HEK293 (cell line): ENCODE measurements at regions of chr20 and their contacts with region 1.

Region 1: DNA sequence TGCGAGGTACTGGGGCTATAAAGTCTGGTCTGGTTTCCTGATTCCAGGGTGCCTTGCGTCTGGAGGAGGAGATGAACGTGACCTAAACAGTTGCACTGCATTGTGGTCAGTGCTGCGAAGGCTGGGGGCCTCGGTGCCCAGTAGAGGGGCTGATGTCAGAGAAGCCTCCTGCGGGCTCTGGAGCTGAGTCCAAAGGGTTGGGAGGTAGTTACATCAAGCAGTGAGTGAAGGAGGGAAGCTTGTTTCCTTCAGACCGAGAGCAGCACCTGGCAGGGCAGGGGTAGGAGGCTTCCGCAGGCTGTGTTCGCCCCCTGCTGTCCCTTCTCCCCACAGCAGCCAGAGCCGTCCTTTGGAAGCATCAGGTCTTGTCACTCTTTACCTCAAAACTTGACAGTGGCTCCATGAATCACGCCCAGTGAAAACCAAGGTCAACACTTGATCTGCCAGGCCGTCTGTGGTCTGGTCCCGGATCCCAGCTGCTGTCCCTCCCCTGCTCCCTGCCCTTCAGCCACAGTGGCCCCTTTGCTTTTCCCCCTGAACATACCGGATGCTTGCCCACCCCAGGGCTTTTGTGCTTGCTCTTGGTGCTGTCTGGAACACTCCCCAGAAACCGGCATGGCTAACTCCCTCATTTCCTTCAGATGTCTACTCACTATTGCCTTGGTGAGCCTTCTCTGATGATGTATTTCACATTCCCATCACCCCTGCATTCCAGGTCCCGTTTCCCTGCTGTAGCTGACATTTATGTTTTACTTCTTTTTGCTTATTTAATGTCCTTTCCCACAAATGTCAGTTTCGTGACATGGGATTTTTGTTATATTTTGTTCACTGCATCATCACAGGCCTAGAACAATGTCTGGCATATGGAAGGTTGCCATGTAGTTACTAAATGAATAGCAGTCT is 7.0 kb downstream of the DYNLRB1 start:
- H3K4me3 ChIP-seq: no peak overlapping the region
- H3K27ac ChIP-seq: no peak overlapping the region
- H3K4me1 ChIP-seq: peaks cover 9% of the 10 kb centered on the region
- CTCF ChIP-seq: peak; percentile 81

Region 2: DNA sequence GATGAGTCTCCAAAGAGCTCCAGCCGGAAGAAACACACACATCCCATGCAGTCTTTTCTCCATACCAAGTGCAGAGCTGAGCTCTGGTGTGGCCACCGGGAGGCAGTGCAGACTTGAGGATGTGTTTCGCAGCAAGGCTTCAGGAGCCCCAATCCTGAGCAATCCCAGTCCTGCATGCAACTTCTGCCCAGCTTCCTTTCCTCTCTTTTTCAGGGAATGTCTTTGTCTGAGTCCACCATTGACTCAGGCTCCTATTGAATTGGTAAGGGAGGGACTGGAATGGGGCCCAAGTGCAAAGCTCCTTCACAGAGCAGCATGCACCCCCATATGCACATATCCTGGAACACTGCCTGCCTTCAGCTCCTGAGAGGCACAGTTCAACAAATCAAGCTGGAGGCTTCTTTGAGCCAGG is 332.5 kb before region 1 on chr20:
- CTCF ChIA-PET with region 1: interaction called, 13 read pairs
- POLR2A ChIA-PET with region 1: no interaction called
- H3K4me3 ChIP-seq: no peak overlapping the region
- H3K27ac ChIP-seq: no peak overlapping the region
- H3K4me1 ChIP-seq: peaks cover 3% of the 10 kb centered on the region; the same call in 1 of the 2 replicates
- CTCF ChIP-seq: peak; percentile 75; the same call in 1 of the 2 replicates

Region 3: DNA sequence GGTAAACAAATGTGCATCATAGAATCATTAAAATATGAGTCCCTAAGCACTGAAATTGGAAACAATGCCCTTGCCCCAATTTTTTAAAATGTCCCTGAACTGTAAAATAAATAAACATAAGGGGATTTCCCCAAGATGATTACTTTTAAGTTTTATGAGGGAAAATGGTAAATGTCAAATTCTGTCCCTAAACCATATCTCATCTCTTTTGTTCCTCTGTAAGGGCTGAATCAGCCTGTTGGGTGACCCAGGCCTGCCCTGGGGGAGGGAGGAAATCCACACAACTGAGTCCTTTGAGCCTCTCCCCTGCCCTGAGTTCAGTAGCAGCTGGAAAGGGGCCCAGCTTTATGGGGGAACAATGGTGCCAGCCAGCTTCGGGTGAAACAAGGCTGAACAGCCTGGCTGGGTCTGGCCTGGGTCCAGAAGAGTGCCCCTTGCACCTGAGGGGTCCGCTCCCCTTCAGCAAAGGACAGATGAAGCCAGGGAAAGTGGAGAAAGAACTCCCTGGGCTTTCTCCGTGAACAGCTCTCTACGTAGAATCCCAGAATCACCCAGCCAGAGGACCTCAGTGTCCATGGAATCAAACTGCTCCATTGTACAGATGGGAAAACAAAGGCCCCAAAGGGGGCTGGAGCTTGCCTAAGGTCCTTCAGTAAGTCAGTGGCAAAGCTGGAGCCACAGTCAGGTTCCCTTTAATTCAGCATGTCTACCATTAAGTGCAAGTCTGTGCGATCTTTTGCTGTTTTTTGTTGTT is 188.4 kb before region 1 on chr20:
- CTCF ChIA-PET with region 1: interaction called, 10 read pairs
- POLR2A ChIA-PET with region 1: no interaction called
- H3K4me3 ChIP-seq: no peak overlapping the region
- H3K27ac ChIP-seq: no peak overlapping the region
- H3K4me1 ChIP-seq: peaks cover 5% of the 10 kb centered on the region; the same call in 1 of the 2 replicates
- CTCF ChIP-seq: no peak

Region 4: GRCh38 chr20:34485068-34485634 is 38.1 kb before region 1 on chr20:
- CTCF ChIA-PET with region 1: no interaction called
- POLR2A ChIA-PET with region 1: no interaction called
- H3K4me3 ChIP-seq: no peak overlapping the region
- H3K27ac ChIP-seq: no peak overlapping the region
- H3K4me1 ChIP-seq: no peaks in the 10 kb centered on the region
- CTCF ChIP-seq: no peak

Region 5: DNA sequence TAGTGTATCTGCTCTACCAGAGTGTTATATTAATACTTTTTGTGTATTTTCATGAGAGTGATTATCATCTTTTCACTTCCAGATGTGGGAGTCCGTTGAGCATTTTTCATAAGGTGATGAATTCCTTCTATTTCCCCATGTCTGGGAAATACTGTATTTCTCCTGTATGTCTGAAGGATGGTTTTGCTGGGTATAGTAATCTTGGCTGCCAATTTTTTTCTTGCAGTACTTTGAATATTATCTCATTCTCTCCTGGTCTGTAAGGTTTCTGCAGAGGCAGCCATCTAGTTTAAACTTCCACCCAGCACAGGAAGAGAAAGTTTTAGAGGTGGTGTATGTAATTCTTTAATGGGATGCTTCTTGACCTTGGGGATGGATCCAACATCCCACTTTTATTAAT is 22.4 kb before region 1 on chr20:
- CTCF ChIA-PET with region 1: no interaction called
- POLR2A ChIA-PET with region 1: no interaction called
- H3K4me3 ChIP-seq: no peak overlapping the region
- H3K27ac ChIP-seq: no peak overlapping the region
- H3K4me1 ChIP-seq: no peaks in the 10 kb centered on the region
- CTCF ChIP-seq: no peak